Activated B cell treated with CpG ODN at 0.5 μM for 24 hours (primary cell): ENCODE measurements at regions of chr11 and their contacts with region 1.

Region 1: GRCh38 chr11:5631969-5632635 is 7.3 kb downstream of the TRIM34 start:
- DNase-seq: no peak
- ATAC-seq: peak; percentile 96
- H3K4me3 Mint-ChIP-seq: peak overlapping the region; percentile 69
- H3K27ac Mint-ChIP-seq: peak overlapping the region; percentile 94
- H3K4me1 Mint-ChIP-seq: peaks cover 49% of the 10 kb centered on the region
- H3K27me3 Mint-ChIP-seq: no peaks in the 10 kb centered on the region
- CTCF ChIP-seq: no peak

Region 2: GRCh38 chr11:5489576-5490357 is 142.3 kb before region 1 on chr11:
- CTCF ChIA-PET with region 1: no interaction called
- POLR2A ChIA-PET with region 1: no interaction called
- intact Hi-C with region 1: no loop called
- DNase-seq: no peak
- ATAC-seq: no peak
- H3K4me3 Mint-ChIP-seq: no peak overlapping the region
- H3K27ac Mint-ChIP-seq: no peak overlapping the region
- H3K4me1 Mint-ChIP-seq: no peaks in the 10 kb centered on the region
- H3K27me3 Mint-ChIP-seq: peaks cover 2% of the 10 kb centered on the region
- CTCF ChIP-seq: no peak

Region 3: DNA sequence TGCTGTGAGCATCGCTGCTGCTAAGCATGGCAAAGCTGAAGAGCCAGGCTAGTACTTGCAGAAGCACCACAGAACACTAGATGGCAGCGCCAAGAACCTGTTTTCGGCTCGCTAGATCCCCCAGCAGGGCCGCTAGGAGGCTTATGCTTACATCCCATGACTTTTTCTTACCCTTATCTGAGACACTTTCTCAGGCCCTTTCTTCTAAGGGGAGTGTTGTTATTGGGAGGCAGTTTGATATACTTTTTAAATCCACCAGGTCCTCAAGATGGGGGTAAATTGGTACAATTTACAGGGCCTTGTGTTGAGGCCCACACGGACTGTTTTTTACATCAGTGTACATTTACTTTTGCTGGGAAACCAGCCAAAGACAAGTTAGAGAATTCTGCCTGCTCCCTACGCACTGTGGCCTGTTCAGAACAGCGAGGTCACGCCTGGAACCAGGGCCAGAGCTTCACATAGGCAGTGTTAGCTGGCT is 31.7 kb before region 1 on chr11:
- CTCF ChIA-PET with region 1: no interaction called
- POLR2A ChIA-PET with region 1: no interaction called
- intact Hi-C with region 1: loop called (anchors 1 kb)
- DNase-seq: peak; percentile 25
- ATAC-seq: peak; percentile 95
- H3K4me3 Mint-ChIP-seq: no peak overlapping the region
- H3K27ac Mint-ChIP-seq: no peak overlapping the region
- H3K4me1 Mint-ChIP-seq: peaks cover 17% of the 10 kb centered on the region
- H3K27me3 Mint-ChIP-seq: peaks cover 3% of the 10 kb centered on the region
- CTCF ChIP-seq: no peak

Region 4: GRCh38 chr11:5690216-5690615 is 58.1 kb after region 1 on chr11:
- CTCF ChIA-PET with region 1: interaction called, 3 read pairs
- POLR2A ChIA-PET with region 1: interaction called, 13 read pairs
- intact Hi-C with region 1: loop called (anchors 1 kb)
- DNase-seq: no peak
- ATAC-seq: no peak
- H3K4me3 Mint-ChIP-seq: peak overlapping the region; percentile 96
- H3K27ac Mint-ChIP-seq: peak overlapping the region; percentile 94
- H3K4me1 Mint-ChIP-seq: peaks cover 62% of the 10 kb centered on the region
- H3K27me3 Mint-ChIP-seq: no peaks in the 10 kb centered on the region
- CTCF ChIP-seq: no peak

Region 5: DNA sequence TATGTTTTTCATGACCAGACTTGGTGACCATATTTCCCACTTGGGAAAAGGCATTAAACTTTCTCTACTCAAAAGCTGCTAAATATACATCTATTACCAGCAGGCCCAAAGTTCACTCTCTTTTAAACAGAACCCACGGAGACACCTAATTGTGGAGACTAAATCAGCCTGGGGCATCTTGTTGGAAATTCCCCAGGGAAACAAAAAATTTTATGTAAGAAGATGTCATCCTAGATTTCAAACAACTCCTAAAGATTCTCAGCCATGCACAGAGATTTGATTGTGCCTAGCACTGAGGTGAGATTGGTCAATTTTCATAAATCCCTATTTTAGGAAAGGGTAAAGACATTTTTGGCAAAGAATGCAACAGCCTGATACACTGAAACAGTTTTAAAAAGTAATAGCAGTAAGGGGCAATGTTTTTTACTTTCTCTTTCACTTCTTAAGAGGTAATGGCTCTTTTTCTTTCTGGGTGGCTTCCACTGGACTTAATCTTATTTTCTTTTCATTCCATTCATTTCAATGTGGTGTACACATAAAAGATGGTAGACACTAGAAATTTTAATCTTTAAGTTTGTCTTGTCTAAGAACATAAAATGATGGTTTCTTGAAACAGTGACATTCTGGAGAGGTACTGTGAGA is 186.3 kb after region 1 on chr11:
- CTCF ChIA-PET with region 1: no interaction called
- POLR2A ChIA-PET with region 1: no interaction called
- intact Hi-C with region 1: no loop called
- DNase-seq: no peak
- ATAC-seq: peak; percentile 25
- H3K4me3 Mint-ChIP-seq: peak overlapping the region; percentile 73
- H3K27ac Mint-ChIP-seq: peak overlapping the region; percentile 64
- H3K4me1 Mint-ChIP-seq: peaks cover 25% of the 10 kb centered on the region
- H3K27me3 Mint-ChIP-seq: no peaks in the 10 kb centered on the region
- CTCF ChIP-seq: no peak